ENCODE measurements at regions of chr2 and their contacts with region 1.

Region 1: DNA sequence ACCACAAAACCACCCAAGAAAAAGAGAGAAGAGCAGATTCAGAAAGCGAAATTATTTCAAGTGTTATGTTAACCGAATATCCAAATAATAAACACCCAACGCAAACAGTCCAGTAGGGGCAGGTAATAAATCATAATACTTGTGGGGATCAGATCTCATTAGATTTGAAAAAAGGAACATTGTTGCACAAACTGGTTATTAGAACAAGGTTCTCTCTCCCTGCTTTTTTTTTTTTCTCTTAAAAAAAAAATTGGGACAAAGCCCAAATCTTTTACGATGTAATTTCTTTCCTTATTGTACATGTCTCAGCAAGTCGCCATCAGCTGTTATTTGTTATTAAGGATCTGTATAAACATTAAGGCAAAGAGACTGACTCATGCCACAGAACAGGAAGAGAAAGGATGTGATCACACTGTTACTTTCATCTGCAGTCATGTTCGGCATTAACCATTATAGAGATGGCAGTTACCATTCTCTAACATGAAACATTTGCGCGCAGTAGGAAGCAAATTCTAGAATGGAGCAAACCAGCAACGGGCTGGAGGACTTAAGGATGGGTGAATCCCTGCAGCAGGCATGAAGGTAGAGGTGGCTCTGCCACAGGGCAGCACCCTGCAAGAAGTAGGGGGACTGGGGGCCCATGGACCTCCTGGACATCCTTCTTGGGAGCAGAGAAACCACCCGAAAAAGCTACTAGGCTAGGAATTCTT is 42.0 kb downstream of the EPHA4 start:
- DNase-seq: no peak
- ATAC-seq: no peak
- H3K4me3 Mint-ChIP-seq: peak overlapping the region; percentile 42
- H3K27ac Mint-ChIP-seq: peak overlapping the region; percentile 19
- H3K4me1 Mint-ChIP-seq: peaks cover 42% of the 10 kb centered on the region
- H3K27me3 Mint-ChIP-seq: no peaks in the 10 kb centered on the region
- CTCF ChIP-seq: no peak

Region 2: GRCh38 chr2:221546505-221547225 is 16.6 kb after region 1 on chr2:
- CTCF ChIA-PET with region 1: no interaction called
- POLR2A ChIA-PET with region 1: no interaction called
- intact Hi-C with region 1: loop called (anchors 2 kb)
- DNase-seq: no peak
- ATAC-seq: no peak
- H3K4me3 Mint-ChIP-seq: no peak overlapping the region
- H3K27ac Mint-ChIP-seq: no peak overlapping the region
- H3K4me1 Mint-ChIP-seq: peaks cover 23% of the 10 kb centered on the region
- H3K27me3 Mint-ChIP-seq: no peaks in the 10 kb centered on the region
- CTCF ChIP-seq: no peak